IMR-90 (cell line): ENCODE measurements at regions of chr19 and their contacts with region 1.

Region 1: DNA sequence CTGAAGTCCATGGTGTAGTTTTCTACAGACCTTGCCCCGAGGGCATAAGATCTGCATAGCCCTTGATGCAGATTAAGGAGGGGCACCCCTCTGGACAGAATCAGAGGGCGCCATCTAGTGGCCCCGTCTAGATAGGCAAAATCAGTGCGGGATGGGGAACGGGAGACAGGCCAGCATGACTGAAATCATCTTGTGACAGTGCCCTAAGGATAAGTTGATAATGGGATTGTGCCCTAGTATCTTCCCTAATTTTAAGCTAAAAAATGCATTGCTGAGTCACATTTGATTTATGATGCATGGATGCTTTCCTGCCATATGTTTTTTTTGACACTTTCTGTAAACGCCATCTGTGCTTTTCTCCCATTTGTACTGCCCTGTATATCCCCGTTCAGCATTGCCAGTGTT is 19.0 kb upstream of the GPI start:
- DNase-seq: peak; percentile 63
- ATAC-seq: peak; percentile 97
- H3K4me3 ChIP-seq: no peak overlapping the region
- H3K27ac ChIP-seq: no peak overlapping the region
- H3K4me1 ChIP-seq: no peaks in the 10 kb centered on the region
- H3K27me3 ChIP-seq: no peaks in the 10 kb centered on the region
- CTCF ChIP-seq: peak; percentile 83
- POLR2A ChIP-seq: no peak
- RAD21 ChIP-seq: peak; percentile 79

Region 2: GRCh38 chr19:34120846-34121639 is 224.9 kb before region 1 on chr19:
- CTCF ChIA-PET with region 1: no interaction called
- POLR2A ChIA-PET with region 1: no interaction called
- dilution Hi-C with region 1: no loop called
- in situ Hi-C with region 1: no loop called
- intact Hi-C with region 1: loop called (anchors 5 kb)
- DNase-seq: peak; percentile 52
- ATAC-seq: peak; percentile 89
- H3K4me3 ChIP-seq: no peak overlapping the region
- H3K27ac ChIP-seq: no peak overlapping the region
- H3K4me1 ChIP-seq: no peaks in the 10 kb centered on the region
- H3K27me3 ChIP-seq: peaks cover 17% of the 10 kb centered on the region
- CTCF ChIP-seq: peak; percentile 76
- POLR2A ChIP-seq: no peak
- RAD21 ChIP-seq: peak; percentile 62

Region 3: DNA sequence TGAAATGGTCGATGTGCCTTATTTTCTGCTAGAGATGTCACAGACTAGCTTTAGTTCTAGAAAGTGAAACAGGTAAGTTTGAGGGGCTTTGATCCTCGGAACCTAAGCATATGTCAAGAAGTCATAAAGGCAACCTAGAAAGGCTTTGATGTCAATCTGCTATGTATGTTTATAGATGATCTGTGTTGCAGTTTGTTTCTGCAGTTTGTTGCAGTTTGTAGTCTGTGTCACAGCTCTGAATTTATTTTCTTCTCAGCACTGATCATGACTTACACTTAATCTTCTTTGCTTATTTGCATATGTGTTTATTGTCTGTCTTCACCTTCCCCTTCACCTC is 167.7 kb before region 1 on chr19:
- CTCF ChIA-PET with region 1: no interaction called
- POLR2A ChIA-PET with region 1: no interaction called
- dilution Hi-C with region 1: no loop called
- in situ Hi-C with region 1: no loop called
- intact Hi-C with region 1: loop called (anchors 5 kb)
- DNase-seq: no peak
- ATAC-seq: no peak
- H3K4me3 ChIP-seq: no peak overlapping the region
- H3K27ac ChIP-seq: no peak overlapping the region
- H3K4me1 ChIP-seq: peaks cover 11% of the 10 kb centered on the region
- H3K27me3 ChIP-seq: no peaks in the 10 kb centered on the region
- CTCF ChIP-seq: no peak
- POLR2A ChIP-seq: no peak
- RAD21 ChIP-seq: no peak

Region 4: GRCh38 chr19:34359140-34359953 is 13.4 kb after region 1 on chr19:
- CTCF ChIA-PET with region 1: interaction called, 10 read pairs
- POLR2A ChIA-PET with region 1: no interaction called
- dilution Hi-C with region 1: no loop called
- in situ Hi-C with region 1: no loop called
- intact Hi-C with region 1: no loop called
- DNase-seq: peak; percentile 96
- ATAC-seq: peak; percentile 95
- H3K4me3 ChIP-seq: peak overlapping the region; percentile 31
- H3K27ac ChIP-seq: peak overlapping the region; percentile 65
- H3K4me1 ChIP-seq: peaks cover 9% of the 10 kb centered on the region
- H3K27me3 ChIP-seq: no peaks in the 10 kb centered on the region
- CTCF ChIP-seq: peak; percentile 53
- POLR2A ChIP-seq: no peak
- RAD21 ChIP-seq: no peak

Region 5: GRCh38 chr19:34692549-34692948 is 346.6 kb after region 1 on chr19:
- CTCF ChIA-PET with region 1: no interaction called
- POLR2A ChIA-PET with region 1: no interaction called
- dilution Hi-C with region 1: no loop called
- in situ Hi-C with region 1: no loop called
- intact Hi-C with region 1: no loop called
- DNase-seq: no peak
- ATAC-seq: no peak
- H3K4me3 ChIP-seq: no peak overlapping the region
- H3K27ac ChIP-seq: no peak overlapping the region
- H3K4me1 ChIP-seq: no peaks in the 10 kb centered on the region
- H3K27me3 ChIP-seq: no peaks in the 10 kb centered on the region
- CTCF ChIP-seq: no peak
- POLR2A ChIP-seq: no peak
- RAD21 ChIP-seq: no peak